ENCODE measurements at regions of chr1 and their contacts with region 1.

Region 1: DNA sequence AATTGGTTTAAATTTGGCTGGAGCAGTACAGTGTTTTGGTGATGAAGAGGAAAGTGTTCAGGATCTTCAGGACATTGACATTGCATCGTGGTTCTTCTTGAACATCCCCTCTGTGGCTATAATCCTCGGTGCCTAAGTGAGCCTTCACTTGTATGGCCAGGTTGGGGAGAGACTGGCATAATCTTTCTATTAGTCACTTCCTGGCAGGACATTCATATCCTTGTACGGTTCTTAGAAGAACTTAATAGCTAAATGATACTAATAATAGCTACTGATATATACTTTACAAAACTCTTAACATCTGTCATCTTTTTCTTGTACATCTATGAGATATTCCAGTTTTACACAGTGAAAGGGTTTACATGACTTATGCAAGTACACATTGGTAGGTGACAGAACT is 35.8 kb downstream of the CELF3 start:
- H3K4me3 Mint-ChIP-seq: no peak overlapping the region
- H3K27ac Mint-ChIP-seq: no peak overlapping the region
- H3K4me1 Mint-ChIP-seq: peaks cover 25% of the 10 kb centered on the region
- H3K27me3 Mint-ChIP-seq: no peaks in the 10 kb centered on the region

Region 2: GRCh38 chr1:151639466-151639865 is 41.3 kb before region 1 on chr1:
- intact Hi-C with region 1: loop called (anchors 10 kb)
- H3K4me3 Mint-ChIP-seq: no peak overlapping the region
- H3K27ac Mint-ChIP-seq: no peak overlapping the region
- H3K4me1 Mint-ChIP-seq: peaks cover 26% of the 10 kb centered on the region
- H3K27me3 Mint-ChIP-seq: no peaks in the 10 kb centered on the region

Measured in dendritic cell treated with granulocyte-macrophage colony-stimulating factor and Interleukin-4, amounts not matched to agents 40 ng/mL and 50 ng/mL, for 4 days (primary cell).